WTC11 (cell line): ENCODE measurements at regions of chr11 and their contacts with region 1.

Region 1: DNA sequence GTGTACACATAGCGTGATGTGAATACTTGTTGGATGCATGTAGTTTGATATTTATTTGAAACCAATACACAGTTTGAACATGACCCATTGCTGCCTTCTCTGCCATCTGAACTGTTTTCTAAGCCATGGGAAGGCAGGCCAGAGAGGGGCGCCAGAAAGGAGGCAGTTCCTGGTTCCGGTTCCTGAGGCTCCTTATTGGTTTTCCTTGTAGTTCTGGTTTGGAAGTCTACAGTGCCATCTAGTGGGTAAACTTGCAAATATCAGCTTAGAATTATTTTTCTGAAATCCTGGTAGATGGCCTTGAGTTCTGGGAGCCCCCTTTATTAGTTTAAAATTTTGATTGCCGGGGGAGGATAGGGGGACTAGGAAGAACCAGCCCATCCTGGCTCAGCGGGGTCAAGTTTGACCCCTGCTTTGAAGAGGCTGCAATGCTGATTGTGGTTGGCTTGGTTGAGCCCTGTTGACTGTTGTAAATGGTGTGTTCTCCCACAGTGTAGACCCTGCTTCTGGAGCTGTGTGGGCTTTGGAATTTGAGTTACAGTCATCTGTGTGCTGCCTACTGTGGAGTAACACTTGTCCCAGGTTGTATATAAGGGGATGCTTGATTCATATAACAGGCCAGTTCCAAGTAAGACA is 48.4 kb downstream of the GRAMD1B start:
- DNase-seq: peak; percentile 64
- ATAC-seq: peak; percentile 81
- H3K4me3 Mint-ChIP-seq: no peak overlapping the region
- H3K27ac Mint-ChIP-seq: no peak overlapping the region
- H3K4me1 Mint-ChIP-seq: peaks cover 40% of the 10 kb centered on the region
- H3K27me3 Mint-ChIP-seq: no peaks in the 10 kb centered on the region
- CTCF ChIP-seq: no peak; the same call in none of the 2 replicates

Region 2: DNA sequence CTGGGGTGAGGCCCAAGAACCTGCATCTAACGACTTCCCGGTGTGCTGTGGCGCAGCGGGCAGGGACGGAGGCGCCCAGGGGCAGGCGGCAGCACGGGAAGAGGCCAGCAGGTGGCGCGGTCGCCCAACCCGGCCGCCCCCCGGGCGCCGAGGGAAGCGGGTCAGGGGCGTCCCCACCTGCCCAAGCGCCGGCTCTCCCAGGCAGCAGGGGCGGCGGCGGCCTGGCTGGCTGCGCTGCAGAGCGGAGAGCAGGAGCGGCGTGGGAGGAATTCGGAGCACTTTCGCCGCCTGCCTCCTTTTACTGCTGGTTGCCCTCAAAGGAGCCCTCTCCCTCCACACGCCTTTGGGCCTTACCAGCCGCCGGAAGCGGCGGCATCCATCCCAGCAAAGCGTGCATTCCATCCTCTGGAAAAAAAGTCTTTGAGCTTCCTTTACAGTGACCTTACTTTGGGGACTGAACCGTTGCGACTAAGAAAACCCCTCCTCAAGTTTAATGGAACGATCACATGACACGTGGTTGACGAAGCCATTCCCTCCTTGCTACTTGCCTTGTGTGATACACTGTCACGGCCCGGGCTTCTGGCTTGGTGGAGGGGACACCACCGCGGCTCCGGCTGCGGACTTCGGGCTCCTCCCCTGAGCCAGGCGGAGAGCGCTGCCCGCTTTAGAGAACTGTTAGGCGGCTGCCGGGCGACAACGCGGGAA is 176.6 kb before region 1 on chr11:
- CTCF ChIA-PET with region 1: interaction called, 18 read pairs
- POLR2A ChIA-PET with region 1: no interaction called
- DNase-seq: peak; percentile 83
- ATAC-seq: peak; percentile 77
- H3K4me3 Mint-ChIP-seq: peak overlapping the region; percentile 82
- H3K27ac Mint-ChIP-seq: no peak overlapping the region
- H3K4me1 Mint-ChIP-seq: peaks cover 25% of the 10 kb centered on the region
- H3K27me3 Mint-ChIP-seq: peaks cover 27% of the 10 kb centered on the region
- CTCF ChIP-seq: peak; percentile 85

Region 3: DNA sequence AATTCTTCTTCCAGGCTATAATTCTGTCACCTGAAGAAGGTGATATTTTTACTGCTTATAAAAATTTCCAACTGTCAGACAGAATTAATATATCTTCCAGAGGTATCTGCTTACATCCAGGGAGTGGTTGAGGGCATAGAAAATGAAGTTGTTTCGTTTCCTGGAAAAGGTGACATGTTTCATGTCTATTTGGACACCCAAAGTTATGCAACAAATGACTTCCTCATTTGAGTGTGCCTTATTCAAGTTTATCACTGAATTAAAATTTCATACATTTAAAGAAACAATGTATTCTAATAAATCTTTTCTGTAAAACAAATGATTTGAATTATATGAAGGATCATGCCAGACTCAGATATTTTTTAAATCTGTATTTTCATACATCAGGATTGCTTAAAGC is 56.9 kb before region 1 on chr11:
- CTCF ChIA-PET with region 1: no interaction called
- POLR2A ChIA-PET with region 1: no interaction called
- DNase-seq: no peak
- ATAC-seq: no peak
- H3K4me3 Mint-ChIP-seq: no peak overlapping the region
- H3K27ac Mint-ChIP-seq: no peak overlapping the region
- H3K4me1 Mint-ChIP-seq: peaks cover 12% of the 10 kb centered on the region
- H3K27me3 Mint-ChIP-seq: peaks cover 36% of the 10 kb centered on the region
- CTCF ChIP-seq: no peak

Region 4: DNA sequence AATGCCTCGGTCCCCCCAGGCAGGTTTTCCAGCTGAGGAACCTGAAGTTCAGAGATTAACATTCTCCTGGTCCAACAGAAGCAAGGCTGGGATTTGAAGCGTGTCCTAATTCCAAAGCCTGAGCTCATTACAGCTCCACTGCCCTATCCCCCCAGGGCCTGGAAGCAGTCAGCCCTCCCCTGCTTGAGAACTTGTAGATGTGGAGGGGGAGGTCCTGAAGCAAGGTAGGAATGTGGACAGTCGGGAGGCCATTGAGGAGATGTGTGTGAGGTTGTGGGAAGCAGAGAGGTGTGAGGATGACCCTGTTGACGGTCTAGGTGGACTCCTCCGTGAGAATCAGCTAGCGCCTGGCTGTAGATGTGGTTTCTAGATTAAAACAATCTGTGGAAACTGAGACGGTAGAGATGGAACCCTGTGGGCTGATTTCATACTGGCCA is 40.3 kb before region 1 on chr11:
- CTCF ChIA-PET with region 1: interaction called, 12 read pairs
- POLR2A ChIA-PET with region 1: no interaction called
- DNase-seq: peak; percentile 28
- ATAC-seq: peak; percentile 87
- H3K4me3 Mint-ChIP-seq: no peak overlapping the region
- H3K27ac Mint-ChIP-seq: peak overlapping the region; percentile 42; the same call in 1 of the 2 replicates
- H3K4me1 Mint-ChIP-seq: peaks cover 49% of the 10 kb centered on the region
- H3K27me3 Mint-ChIP-seq: peaks cover 3% of the 10 kb centered on the region; the same call in 1 of the 2 replicates
- CTCF ChIP-seq: no peak

Region 5: DNA sequence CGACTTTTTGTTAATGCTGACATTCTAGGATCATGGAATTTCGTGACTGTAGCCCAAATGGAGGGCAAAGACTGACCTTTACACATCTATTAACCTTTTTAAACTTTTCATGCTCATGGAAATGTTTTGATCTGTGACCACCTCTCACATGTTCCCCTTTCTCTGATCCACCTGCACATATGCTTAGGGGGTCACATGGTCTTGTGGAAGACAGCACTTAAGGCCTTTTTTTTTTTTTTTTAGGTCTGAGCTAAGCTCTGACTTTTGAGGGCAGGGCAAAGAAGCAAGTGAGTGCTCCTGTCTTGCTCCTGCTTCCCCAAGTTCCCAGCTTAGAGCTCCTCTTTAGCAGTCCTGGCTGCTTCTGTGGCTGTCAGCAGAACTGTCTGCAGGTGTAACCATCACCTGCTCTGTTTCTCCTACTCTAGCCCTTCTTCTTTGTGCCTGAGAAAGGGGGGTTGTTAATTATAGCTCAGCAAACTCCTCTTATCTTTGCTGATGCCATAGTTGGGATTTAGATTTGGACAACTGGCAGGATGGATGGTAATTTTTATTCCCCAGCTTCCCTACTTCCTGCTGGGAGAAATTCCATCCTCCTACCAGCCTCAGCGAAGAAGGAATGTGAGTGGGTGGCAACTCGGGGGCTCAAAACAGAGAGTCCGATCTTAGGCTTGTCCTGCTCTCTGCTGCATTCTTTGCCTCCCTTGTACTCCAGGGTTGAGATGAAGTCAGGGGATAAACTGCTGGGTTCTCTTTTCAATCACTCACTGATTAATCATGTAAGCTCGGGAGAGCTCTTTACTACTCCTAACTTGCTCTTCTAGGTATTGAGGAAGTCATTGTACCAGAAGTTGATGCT is 16.0 kb after region 1 on chr11:
- CTCF ChIA-PET with region 1: interaction called, 13 read pairs
- POLR2A ChIA-PET with region 1: no interaction called
- DNase-seq: no peak
- ATAC-seq: peak; percentile 65
- H3K4me3 Mint-ChIP-seq: no peak overlapping the region
- H3K27ac Mint-ChIP-seq: peak overlapping the region; percentile 64; the same call in 1 of the 2 replicates
- H3K4me1 Mint-ChIP-seq: peaks cover 31% of the 10 kb centered on the region
- H3K27me3 Mint-ChIP-seq: no peaks in the 10 kb centered on the region
- CTCF ChIP-seq: no peak

Region 6: GRCh38 chr11:123532131-123532530 is 53.7 kb after region 1 on chr11:
- CTCF ChIA-PET with region 1: no interaction called
- POLR2A ChIA-PET with region 1: no interaction called
- DNase-seq: no peak
- ATAC-seq: peak; percentile 45
- H3K4me3 Mint-ChIP-seq: no peak overlapping the region
- H3K27ac Mint-ChIP-seq: no peak overlapping the region
- H3K4me1 Mint-ChIP-seq: peaks cover 56% of the 10 kb centered on the region
- H3K27me3 Mint-ChIP-seq: no peaks in the 10 kb centered on the region
- CTCF ChIP-seq: no peak

Region 7: DNA sequence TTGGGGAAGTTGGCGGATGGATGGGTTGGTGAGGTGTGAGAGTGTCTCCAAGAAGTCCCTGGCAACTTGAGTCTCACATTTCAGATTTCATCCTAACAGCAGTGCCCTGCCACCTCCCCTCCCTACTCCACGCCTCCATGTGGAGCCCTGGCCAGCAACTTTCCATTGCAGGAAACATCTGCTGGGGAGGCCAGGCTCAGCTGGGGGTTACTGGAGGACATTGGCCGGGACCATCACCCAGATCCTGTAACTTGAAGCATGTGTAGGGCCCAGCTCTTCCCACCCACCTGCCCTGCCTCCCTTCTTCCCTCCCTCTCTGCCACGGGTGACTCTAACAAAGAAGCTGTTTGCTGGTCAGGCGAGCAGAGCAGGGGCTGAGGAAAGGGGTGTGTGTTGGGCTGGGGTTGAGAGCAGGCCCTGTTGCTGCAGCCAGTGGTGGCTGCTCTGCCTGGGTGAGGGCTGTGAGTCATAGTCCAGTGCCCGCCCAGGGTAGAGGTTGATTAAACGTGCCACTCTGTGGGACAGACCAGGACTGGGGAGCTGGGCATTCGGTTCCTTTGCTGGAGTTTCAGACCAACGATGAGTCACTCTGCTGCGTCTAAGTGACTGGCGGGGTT is 111.9 kb after region 1 on chr11:
- CTCF ChIA-PET with region 1: no interaction called
- POLR2A ChIA-PET with region 1: no interaction called
- DNase-seq: no peak
- ATAC-seq: no peak
- H3K4me3 Mint-ChIP-seq: no peak overlapping the region
- H3K27ac Mint-ChIP-seq: no peak overlapping the region
- H3K4me1 Mint-ChIP-seq: peaks cover 21% of the 10 kb centered on the region
- H3K27me3 Mint-ChIP-seq: no peaks in the 10 kb centered on the region
- CTCF ChIP-seq: no peak